ENCODE measurements at regions of chrX and their contacts with region 1.

Region 1: GRCh38 chrX:153971450-153972367 is at the start of gene HCFC1:
- DNase-seq: peak; percentile 87
- H3K4me3 Mint-ChIP-seq: peak within 1 kb of the TSS; percentile 100
- H3K27ac Mint-ChIP-seq: peak within 1 kb of the TSS; percentile 100
- H3K4me1 Mint-ChIP-seq: peaks cover 37% of the 10 kb centered on the region
- H3K27me3 Mint-ChIP-seq: no peaks in the 10 kb centered on the region
- total RNA-seq, gene HCFC1: 105 and 106 TPM in 2 replicates

Region 2: DNA sequence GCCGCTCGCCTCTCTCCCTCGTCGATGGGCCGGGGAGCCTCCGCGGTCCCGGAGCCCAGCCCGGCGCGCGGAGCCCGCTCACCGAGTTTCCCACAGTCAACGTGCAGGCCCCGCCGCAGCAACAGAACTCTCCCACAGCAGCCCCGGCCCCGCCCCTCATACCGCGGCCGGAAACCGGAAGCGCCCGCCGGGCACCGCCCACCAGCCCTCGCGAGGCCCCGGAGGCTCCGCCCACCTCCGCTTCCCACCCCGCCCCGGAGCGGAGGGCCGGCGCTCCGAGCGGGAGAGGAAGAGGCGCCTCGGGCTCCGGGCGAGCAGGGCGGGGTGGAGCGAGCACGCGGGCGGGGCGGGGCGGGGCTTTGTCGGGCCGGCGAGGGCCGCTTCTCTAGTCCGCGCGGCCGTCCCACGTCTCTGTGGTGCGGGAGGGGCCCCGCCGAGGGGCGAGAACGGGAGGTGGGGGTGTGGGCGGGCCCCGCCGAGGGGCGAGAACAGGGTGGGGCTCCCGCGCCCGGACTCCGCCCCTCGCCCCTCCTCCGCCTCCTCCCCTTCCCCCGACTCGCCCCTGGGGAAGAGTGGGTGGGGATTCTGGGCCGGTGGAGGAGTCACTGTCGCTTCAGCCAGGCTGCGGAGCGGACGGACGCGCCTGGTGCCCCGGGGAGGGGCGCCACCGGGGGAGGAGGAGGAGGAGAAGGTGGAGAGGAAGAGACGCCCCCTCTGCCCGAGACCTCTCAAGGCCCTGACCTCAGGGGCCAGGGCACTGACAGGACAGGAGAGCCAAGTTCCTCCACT is 247.3 kb before region 1 on chrX and contains the starts of genes ABCD1 and BCAP31:
- intact Hi-C with region 1: loop called (anchors 1 kb)
- DNase-seq: peak; percentile 86
- H3K4me3 Mint-ChIP-seq: peak within 1 kb of the TSS; percentile 92
- H3K27ac Mint-ChIP-seq: peak within 1 kb of the TSS; percentile 85
- H3K4me1 Mint-ChIP-seq: peaks cover 17% of the 10 kb centered on the region
- H3K27me3 Mint-ChIP-seq: no peaks in the 10 kb centered on the region
- total RNA-seq, gene ABCD1: 8.4 TPM in 2 replicates
- total RNA-seq, gene BCAP31: 156 and 166 TPM in 2 replicates

Region 3: DNA sequence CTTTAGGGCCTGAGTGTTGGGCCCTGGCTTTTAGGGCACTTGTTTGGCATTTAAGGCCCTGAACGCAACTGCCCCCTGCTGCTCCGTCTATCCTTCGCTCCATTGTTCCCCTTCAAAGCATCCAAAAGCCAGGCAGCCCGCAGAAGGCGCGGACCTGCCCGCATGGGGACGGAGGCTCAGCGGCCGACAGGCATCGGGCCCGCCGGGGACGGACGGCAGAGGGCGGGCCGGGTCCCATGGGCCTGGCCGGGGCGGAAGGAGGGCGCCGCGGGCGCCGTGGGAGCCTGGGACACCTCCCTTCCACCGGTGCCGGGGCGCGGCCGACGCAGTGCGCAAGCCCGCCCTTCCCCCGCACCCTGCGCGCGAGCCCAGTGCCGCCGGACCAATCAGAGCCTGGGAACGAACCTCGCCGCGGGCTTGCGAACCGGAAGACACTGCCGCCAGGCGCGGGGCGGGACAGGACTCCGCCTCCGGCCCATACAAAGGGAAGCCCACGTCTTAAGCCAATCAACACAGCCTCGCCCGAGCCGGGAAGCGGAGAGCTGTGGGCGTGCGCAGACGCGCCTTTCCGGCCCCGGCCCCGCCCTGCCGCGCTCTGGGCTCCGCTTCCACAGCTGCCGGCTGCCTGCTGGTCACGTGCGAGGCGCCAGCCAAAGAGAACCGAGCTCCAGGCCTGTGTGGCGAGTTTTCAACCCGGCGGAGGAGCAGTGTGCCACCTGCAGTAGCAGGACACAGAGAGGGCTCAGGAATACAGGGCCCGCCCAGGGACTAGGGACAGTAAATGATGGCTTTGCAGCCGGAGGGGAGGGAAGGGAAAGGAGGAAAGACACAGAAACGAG is 43.6 kb before region 1 on chrX:
- intact Hi-C with region 1: loop called (anchors 1 kb)
- DNase-seq: peak; percentile 91
- H3K4me3 Mint-ChIP-seq: peak overlapping the region; percentile 91
- H3K27ac Mint-ChIP-seq: peak overlapping the region; percentile 97
- H3K4me1 Mint-ChIP-seq: peaks cover 24% of the 10 kb centered on the region
- H3K27me3 Mint-ChIP-seq: no peaks in the 10 kb centered on the region

Region 4: GRCh38 chrX:153989973-153990655 is 18.4 kb after region 1 on chrX:
- intact Hi-C with region 1: no loop called
- DNase-seq: no peak
- H3K4me3 Mint-ChIP-seq: no peak overlapping the region
- H3K27ac Mint-ChIP-seq: no peak overlapping the region
- H3K4me1 Mint-ChIP-seq: peaks cover 2% of the 10 kb centered on the region
- H3K27me3 Mint-ChIP-seq: no peaks in the 10 kb centered on the region

Region 5: GRCh38 chrX:154019633-154020528 is 48.2 kb after region 1 on chrX and contains the start of gene IRAK1:
- intact Hi-C with region 1: loop called (anchors 2 kb)
- DNase-seq: peak; percentile 57
- H3K4me3 Mint-ChIP-seq: peak within 1 kb of the TSS; percentile 94
- H3K27ac Mint-ChIP-seq: peak within 1 kb of the TSS; percentile 89
- H3K4me1 Mint-ChIP-seq: peaks cover 4% of the 10 kb centered on the region
- H3K27me3 Mint-ChIP-seq: no peaks in the 10 kb centered on the region
- total RNA-seq, gene IRAK1: 165 and 172 TPM in 2 replicates

Region 6: GRCh38 chrX:154046031-154046781 is 74.5 kb after region 1 on chrX:
- intact Hi-C with region 1: no loop called
- DNase-seq: no peak
- H3K4me3 Mint-ChIP-seq: no peak overlapping the region
- H3K27ac Mint-ChIP-seq: no peak overlapping the region
- H3K4me1 Mint-ChIP-seq: peaks cover 7% of the 10 kb centered on the region
- H3K27me3 Mint-ChIP-seq: no peaks in the 10 kb centered on the region

Region 7: DNA sequence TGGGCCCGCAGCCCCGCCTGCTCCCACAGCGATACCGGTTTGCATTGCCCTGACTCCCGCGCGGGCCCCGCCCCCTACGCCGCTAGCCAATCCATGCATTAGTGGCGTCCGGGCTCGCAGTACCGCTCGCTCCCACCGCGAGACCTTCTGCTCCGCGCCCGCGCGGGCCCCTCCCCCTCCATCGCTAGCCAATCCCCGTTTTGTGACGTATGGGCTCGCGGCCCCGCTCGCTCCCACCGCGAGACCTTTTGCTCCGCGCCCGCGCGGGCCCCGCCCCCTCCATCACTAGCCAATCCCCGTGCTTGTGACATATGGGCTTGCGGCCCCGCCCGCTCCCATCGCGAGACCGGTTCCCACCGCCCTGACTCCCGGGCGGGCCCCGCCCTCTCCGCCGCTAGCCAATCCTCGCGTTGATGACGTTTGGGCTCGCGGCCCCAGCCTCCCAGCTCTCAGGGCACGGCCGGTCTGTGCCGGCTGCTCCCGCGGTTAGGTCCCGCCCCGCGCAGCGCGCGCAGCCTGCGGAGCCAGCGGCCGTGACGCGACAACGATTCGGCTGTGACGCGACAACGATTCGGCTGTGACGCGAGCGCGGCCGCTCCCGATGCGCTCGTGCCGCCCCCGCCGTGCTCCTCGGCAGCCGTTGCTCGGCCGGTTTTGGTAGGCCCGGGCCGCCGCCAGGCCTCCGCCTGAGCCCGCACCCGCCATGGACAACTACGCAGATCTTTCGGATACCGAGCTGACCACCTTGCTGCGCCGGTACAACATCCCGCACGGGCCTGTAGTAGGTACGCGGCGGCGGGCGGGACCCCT is 407.3 kb after region 1 on chrX and contains the start of gene EMD:
- intact Hi-C with region 1: loop called (anchors 1 kb)
- DNase-seq: peak; percentile 94
- H3K4me3 Mint-ChIP-seq: peak within 1 kb of the TSS; percentile 89
- H3K27ac Mint-ChIP-seq: peak within 1 kb of the TSS; percentile 81
- H3K4me1 Mint-ChIP-seq: peaks cover 4% of the 10 kb centered on the region
- H3K27me3 Mint-ChIP-seq: no peaks in the 10 kb centered on the region
- total RNA-seq, gene EMD: 83.3 and 85.5 TPM in 2 replicates

Region 8: GRCh38 chrX:154661170-154661569 is 689.5 kb after region 1 on chrX:
- intact Hi-C with region 1: no loop called
- DNase-seq: no peak
- H3K4me3 Mint-ChIP-seq: no peak overlapping the region
- H3K27ac Mint-ChIP-seq: no peak overlapping the region
- H3K4me1 Mint-ChIP-seq: no peaks in the 10 kb centered on the region
- H3K27me3 Mint-ChIP-seq: peaks cover 4% of the 10 kb centered on the region

Measured in activated T-helper 1 cell treated with anti-CD3 and anti-CD28 coated beads, Interleukin-12 subunit alpha, Interleukin-12 subunit beta, Interleukin-2, Interleukin-4 antibody, amounts not matched to agents 30 ng/mL and 10 ng/mL and 1 ng/mL, durations not matched to agents 14 hours and 24 hours and 36 hours (primary cell).